ENCODE measurements at regions of chr20 and their contacts with region 1.

Region 1: GRCh38 chr20:9609887-9610502 is 95.6 kb downstream of the LAMP5 start:
- DNase-seq: peak; percentile 86
- H3K4me3 ChIP-seq: no peak overlapping the region
- H3K27ac ChIP-seq: no peak overlapping the region
- H3K4me1 ChIP-seq: no peaks in the 10 kb centered on the region
- H3K27me3 ChIP-seq: no peaks in the 10 kb centered on the region
- CTCF ChIP-seq: peak; percentile 56 to 76 (median 64)
- EP300 ChIP-seq: no peak
- POLR2A ChIP-seq: no peak

Region 2: DNA sequence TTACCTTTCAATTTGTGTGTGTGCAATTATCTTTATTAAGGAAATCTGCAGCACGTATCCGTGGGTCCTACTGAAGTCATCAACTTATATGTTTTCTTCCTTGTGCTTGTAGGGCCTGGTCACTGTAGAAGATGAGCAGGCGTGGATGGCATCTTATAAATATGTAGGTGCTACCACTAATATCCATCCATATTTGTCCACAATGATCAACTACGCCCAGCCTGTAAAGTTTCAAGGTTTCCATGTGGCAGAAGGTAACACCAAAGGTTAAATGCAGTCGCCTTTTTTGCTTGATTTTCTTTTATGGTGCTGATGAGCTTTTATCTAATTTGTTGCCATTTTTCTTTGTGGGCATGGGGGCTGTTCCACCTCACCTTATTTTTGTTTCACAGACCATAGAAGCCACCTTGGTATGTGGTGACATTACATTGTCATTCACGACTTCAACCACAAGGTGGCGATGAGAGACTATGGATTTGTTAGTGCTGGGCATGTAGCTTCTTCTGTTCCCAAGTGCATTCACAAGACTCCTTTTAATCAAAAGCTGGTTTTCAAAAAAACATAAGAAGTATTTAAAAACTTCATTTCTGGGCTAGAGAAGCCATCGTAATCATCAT is 202.1 kb before region 1 on chr20:
- intact Hi-C with region 1: loop called (anchors 1 kb)
- DNase-seq: no peak
- H3K4me3 ChIP-seq: no peak overlapping the region
- H3K27ac ChIP-seq: no peak overlapping the region
- H3K4me1 ChIP-seq: no peaks in the 10 kb centered on the region
- H3K27me3 ChIP-seq: no peaks in the 10 kb centered on the region
- CTCF ChIP-seq: peak; percentile 76 to 81 (median 77)
- EP300 ChIP-seq: no peak
- POLR2A ChIP-seq: no peak

Region 3: DNA sequence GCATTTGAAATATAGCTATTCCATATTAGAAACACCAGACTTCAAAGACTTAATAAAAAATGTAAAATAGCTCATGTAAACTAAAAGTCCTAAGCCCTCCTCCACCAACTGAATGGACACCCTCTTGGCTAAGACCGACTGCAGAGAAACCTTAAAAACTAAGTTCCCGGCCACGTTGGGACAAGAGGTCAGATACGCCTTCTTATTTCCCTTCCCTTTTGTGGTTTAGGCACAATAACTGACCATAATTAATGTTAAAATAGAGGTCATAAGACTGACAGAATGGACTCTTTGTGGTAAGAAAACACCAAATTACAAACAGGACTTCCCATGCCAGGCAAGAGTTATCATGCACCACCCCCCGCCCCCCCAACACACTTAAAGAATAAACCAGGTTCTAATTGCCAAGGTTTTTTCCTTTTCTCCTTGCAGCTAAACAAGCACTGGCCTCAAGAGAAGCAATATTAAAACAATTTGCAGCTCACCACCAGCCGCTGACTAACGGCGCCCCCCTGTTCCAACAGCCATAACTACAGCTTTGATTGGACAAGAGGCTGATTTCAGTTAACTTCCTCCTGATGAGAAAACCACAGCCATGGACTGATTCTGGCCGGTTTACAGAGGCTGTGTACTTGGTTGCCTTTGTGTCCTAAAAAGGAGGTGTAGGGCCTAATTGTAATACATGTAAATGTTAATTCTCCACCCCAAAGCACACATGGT is 106.3 kb before region 1 on chr20:
- intact Hi-C with region 1: no loop called
- DNase-seq: peak; percentile 82
- H3K4me3 ChIP-seq: no peak overlapping the region
- H3K27ac ChIP-seq: no peak overlapping the region
- H3K4me1 ChIP-seq: peaks cover 4 to 27% (median 24%) of the 10 kb centered on the region in 4 donors
- H3K27me3 ChIP-seq: peaks cover 0 to 41% (median 12%) of the 10 kb centered on the region in 4 donors
- CTCF ChIP-seq: no peak
- EP300 ChIP-seq: no peak
- POLR2A ChIP-seq: no peak

Measured in esophagus muscularis mucosa (tissue), 4 donors.